Thyroid gland (tissue), 4 donors: ENCODE measurements at regions of chr22 and their contacts with region 1.

Region 1: GRCh38 chr22:50250555-50251476 is at the start of gene HDAC10:
- DNase-seq: peak; percentile 84 to 86
- H3K4me3 ChIP-seq: peak within 1 kb of the TSS; percentile 2 to 84 (median 69)
- H3K27ac ChIP-seq: peak within 1 kb of the TSS; percentile 21 to 54 (median 29)
- H3K4me1 ChIP-seq: peaks cover 10 to 26% of the 10 kb centered on the region in 2 donors
- H3K27me3 ChIP-seq: no peaks in the 10 kb centered on the region
- CTCF ChIP-seq: no peak
- POLR2A ChIP-seq: peak in 1 of 2 donors; percentile 44
- total RNA-seq, gene HDAC10: 31.4 to 42.7 (median 32.5) TPM

Region 2: GRCh38 chr22:50326959-50327710 is 76.3 kb after region 1 on chr22 and contains the start of gene DENND6B:
- intact Hi-C with region 1: loop called (anchors 5 kb)
- DNase-seq: peak; percentile 79 to 81
- H3K4me3 ChIP-seq: peak within 1 kb of the TSS; percentile 52 to 76 (median 56)
- H3K27ac ChIP-seq: peak within 1 kb of the TSS; percentile 86 to 90 (median 88)
- H3K4me1 ChIP-seq: peaks cover 10 to 13% of the 10 kb centered on the region in 2 donors
- H3K27me3 ChIP-seq: no peaks in the 10 kb centered on the region
- CTCF ChIP-seq: peak in 4 of 6 experiments; percentile 18 to 97 (median 94)
- POLR2A ChIP-seq: peak in 1 of 2 donors; percentile 56
- total RNA-seq, gene DENND6B: 4.3 to 14.3 (median 9.3) TPM

Region 3: DNA sequence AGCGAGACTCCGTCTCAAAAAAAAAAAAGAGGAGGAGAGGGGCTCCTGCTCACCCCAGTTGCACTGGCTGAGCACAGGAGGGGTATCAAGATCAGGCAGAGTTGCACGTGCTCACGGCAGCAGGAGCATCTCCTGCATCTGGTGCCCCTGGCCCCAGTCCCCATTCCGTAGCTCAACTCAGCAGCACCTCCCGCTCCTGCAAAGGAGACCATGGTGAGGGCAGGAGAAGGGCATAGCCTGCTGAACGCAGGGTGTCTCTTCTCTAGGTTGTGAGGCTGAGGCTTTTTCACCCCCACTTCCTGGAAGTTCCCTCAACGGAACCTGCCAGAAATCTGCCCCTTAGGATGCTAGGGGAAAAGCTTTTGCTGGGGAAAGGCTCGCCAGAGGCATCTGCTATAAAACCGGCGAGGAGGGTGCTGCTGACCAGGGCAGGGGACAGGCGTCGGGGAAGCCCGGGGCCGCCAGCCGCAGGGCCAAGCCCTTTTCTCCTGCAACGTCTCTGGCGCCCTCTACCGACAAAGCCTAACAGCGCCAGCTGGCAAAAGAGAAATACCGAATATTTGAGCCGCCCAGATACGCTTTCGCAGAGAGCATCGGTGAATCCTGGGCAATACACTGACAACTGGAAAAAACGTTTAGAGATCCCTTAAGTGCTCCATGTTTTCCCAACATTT is 91.3 kb after region 1 on chr22:
- intact Hi-C with region 1: loop called (anchors 5 kb)
- DNase-seq: peak; percentile 87 to 93
- H3K4me3 ChIP-seq: peak overlapping the region in 2 of 3 donors; percentile 2 to 86
- H3K27ac ChIP-seq: peak overlapping the region in 2 of 3 donors; percentile 11 to 69
- H3K4me1 ChIP-seq: peaks cover 3 to 11% of the 10 kb centered on the region in 2 donors
- H3K27me3 ChIP-seq: no peaks in the 10 kb centered on the region
- CTCF ChIP-seq: peak; percentile 93 to 99 (median 94)
- POLR2A ChIP-seq: no peak

Region 4: GRCh38 chr22:50599786-50600455 is 349.1 kb after region 1 on chr22:
- intact Hi-C with region 1: loop called (anchors 10 kb)
- DNase-seq: peak; percentile 53 to 55
- H3K4me3 ChIP-seq: peak overlapping the region in 1 of 3 donors; percentile 34
- H3K27ac ChIP-seq: no peak overlapping the region
- H3K4me1 ChIP-seq: peaks cover 0 to 10% of the 10 kb centered on the region in 2 donors
- H3K27me3 ChIP-seq: peaks cover 4% of the 10 kb centered on the region
- CTCF ChIP-seq: no peak
- POLR2A ChIP-seq: no peak